Activated CD4-positive, alpha-beta T cell treated with anti-CD3 and anti-CD28 coated beads, Interleukin-2, amount 10 ng/mL, durations not matched to agents 24 days and 14 days (primary cell): ENCODE measurements at regions of chr7 and their contacts with region 1.

Region 1: DNA sequence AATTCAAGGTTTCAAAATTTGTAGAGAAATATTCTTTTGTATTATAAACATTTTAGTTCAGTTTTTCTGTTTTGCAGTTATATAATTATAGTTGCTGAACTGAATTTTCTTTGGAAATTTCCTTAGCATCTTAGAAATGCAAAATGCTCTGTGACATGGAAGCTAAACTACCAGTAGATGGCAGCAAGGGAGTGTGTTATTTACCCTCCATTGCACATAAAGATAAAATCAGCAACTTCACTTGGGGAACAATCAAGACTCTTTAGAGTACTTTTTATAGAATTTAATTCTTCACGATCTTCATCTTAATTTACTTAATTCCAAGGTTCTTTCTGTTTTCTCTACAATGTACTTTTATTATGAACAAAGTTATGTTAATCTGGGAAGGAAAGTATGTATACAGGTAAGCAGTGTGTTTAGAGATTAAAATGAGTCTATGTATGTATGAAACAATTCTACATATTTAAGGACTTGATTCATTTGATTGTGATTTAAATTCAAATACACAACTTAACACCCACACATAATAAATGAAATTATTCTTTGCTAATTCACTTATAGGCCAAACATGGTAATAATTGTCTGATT is 404.2 kb downstream of the THSD7A start:
- DNase-seq: no peak
- H3K4me3 Mint-ChIP-seq: no peak overlapping the region
- H3K27ac Mint-ChIP-seq: no peak overlapping the region
- H3K4me1 Mint-ChIP-seq: no peaks in the 10 kb centered on the region
- H3K27me3 Mint-ChIP-seq: no peaks in the 10 kb centered on the region

Region 2: GRCh38 chr7:11613292-11613930 is 185.6 kb after region 1 on chr7:
- intact Hi-C with region 1: no loop called
- DNase-seq: no peak
- H3K4me3 Mint-ChIP-seq: no peak overlapping the region
- H3K27ac Mint-ChIP-seq: no peak overlapping the region
- H3K4me1 Mint-ChIP-seq: no peaks in the 10 kb centered on the region
- H3K27me3 Mint-ChIP-seq: no peaks in the 10 kb centered on the region

Region 3: GRCh38 chr7:12067141-12067831 is 639.5 kb after region 1 on chr7:
- intact Hi-C with region 1: loop called (anchors 10 kb)
- DNase-seq: peak; percentile 87
- H3K4me3 Mint-ChIP-seq: no peak overlapping the region
- H3K27ac Mint-ChIP-seq: no peak overlapping the region
- H3K4me1 Mint-ChIP-seq: peaks cover 2% of the 10 kb centered on the region
- H3K27me3 Mint-ChIP-seq: peaks cover 2% of the 10 kb centered on the region